ENCODE measurements at regions of chr17 and their contacts with region 1.

Region 1: GRCh38 chr17:700504-701094 is 14.0 kb downstream of the VPS53 start:
- DNase-seq: peak in 7 of 9 donors; percentile 25 to 63 (median 58)
- ATAC-seq: peak; percentile 71
- H3K4me3 ChIP-seq: no peak overlapping the region
- H3K4me3 Mint-ChIP-seq: no peak overlapping the region
- H3K27ac ChIP-seq: no peak overlapping the region
- H3K27ac Mint-ChIP-seq: peak overlapping the region in 3 of 9 donors; percentile 46 to 53 (median 51)
- H3K4me1 ChIP-seq: no peaks in the 10 kb centered on the region
- H3K4me1 Mint-ChIP-seq: peaks cover 0 to 14% (median 6%) of the 10 kb centered on the region in 7 donors
- H3K27me3 ChIP-seq: no peaks in the 10 kb centered on the region
- H3K27me3 Mint-ChIP-seq: no peaks in the 10 kb centered on the region

Region 2: DNA sequence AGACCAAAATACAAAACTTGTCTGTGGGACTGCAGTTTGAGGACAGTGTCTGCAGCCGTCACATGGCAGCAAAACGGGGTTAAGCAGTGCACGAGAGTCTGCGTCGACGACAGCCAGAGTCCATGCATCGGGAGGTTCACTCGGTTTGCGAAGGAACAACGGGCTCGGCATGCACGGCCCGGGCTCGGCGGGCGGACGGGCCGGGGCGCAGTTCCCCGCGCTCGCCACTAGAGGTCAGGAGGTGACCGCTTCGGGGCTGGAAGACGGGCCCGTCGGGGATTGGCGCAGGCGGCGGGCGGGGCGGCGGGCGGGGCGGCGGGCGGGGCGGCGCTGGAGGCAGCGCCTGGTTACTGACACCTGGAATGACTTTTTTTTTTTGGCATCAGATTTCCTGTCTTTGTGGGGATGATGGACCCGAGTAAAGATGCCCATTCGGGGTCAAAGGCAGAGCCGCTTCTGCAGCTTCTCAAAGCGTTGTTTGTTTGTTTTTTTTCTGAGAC is 556.8 kb before region 1 on chr17:
- CTCF ChIA-PET with region 1: interaction called, 3 read pairs
- POLR2A ChIA-PET with region 1: no interaction called
- intact Hi-C with region 1: loop called (anchors 2 kb)
- DNase-seq: peak; percentile 72 to 94 (median 82)
- ATAC-seq: peak; percentile 98
- H3K4me3 ChIP-seq: no peak overlapping the region
- H3K4me3 Mint-ChIP-seq: peak overlapping the region in 1 of 10 donors; percentile 60
- H3K27ac ChIP-seq: no peak overlapping the region
- H3K27ac Mint-ChIP-seq: no peak overlapping the region
- H3K4me1 ChIP-seq: peaks cover 0 to 4% of the 10 kb centered on the region in 2 donors
- H3K4me1 Mint-ChIP-seq: peaks cover 0 to 6% (median 3%) of the 10 kb centered on the region in 7 donors
- H3K27me3 ChIP-seq: no peaks in the 10 kb centered on the region
- H3K27me3 Mint-ChIP-seq: peaks cover 0 to 12% (median 0%) of the 10 kb centered on the region in 5 donors

Region 3: DNA sequence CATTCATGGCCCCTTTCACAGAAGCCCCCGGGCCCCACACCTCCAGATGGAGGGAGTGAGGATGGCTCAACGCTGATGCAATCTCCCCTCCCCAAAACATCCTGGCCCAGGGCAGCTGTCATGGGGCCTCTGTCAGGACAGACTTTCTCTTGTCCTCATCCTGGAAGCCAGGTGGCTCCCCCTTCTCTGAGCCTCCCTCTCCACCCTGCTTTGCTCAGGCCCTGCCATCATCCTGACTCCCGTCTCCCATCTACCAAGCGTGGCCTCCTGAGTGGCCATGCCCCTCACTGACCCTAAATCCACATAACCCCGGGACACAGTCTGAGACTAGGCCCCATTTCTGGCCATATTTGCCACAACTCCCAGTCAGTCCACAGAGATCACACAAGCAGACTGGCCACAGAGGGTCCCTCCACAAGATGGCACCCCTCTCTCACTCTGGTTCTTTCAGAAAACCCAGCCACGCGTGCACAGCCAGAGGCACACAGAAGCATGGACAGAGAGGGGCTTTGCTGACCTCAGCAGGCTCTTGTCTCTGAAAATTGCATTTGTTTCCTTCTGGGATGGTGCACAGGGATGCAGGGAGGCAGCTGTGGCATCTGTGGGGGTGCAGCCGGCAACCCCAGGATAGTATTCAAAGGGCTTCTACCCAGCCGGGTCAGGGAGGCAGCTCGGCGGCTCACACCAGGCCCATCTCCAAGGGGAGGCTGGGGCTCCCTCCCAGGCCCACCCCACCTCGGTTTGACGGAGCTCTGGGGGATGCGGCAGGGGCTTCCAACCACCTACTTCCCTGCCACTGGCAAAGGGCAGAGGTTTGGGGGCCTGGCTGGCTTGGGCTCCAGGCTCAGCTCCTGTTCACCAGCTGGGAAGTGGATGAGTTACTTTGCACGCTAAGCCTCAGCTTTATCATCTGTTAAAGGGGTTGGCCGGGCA is 536.0 kb before region 1 on chr17:
- CTCF ChIA-PET with region 1: interaction called, 19 read pairs
- POLR2A ChIA-PET with region 1: no interaction called
- intact Hi-C with region 1: loop called in 1 of 2 experiments (anchors 2 kb)
- DNase-seq: peak in 7 of 9 donors; percentile 13 to 45 (median 28)
- ATAC-seq: peak; percentile 54
- H3K4me3 ChIP-seq: no peak overlapping the region
- H3K4me3 Mint-ChIP-seq: no peak overlapping the region
- H3K27ac ChIP-seq: no peak overlapping the region
- H3K27ac Mint-ChIP-seq: no peak overlapping the region
- H3K4me1 ChIP-seq: no peaks in the 10 kb centered on the region
- H3K4me1 Mint-ChIP-seq: peaks cover 0 to 4% (median 0%) of the 10 kb centered on the region in 7 donors
- H3K27me3 ChIP-seq: no peaks in the 10 kb centered on the region
- H3K27me3 Mint-ChIP-seq: peaks cover 0 to 10% (median 0%) of the 10 kb centered on the region in 5 donors

Measured in naive thymus-derived CD4-positive, alpha-beta T cell (primary cell).